ENCODE measurements at regions of chr18 and their contacts with region 1.

Region 1: GRCh38 chr18:70205421-70206397 is at the start of gene RTTN:
- DNase-seq: peak; percentile 97
- H3K4me3 ChIP-seq: peak within 1 kb of the TSS; percentile 67 to 91 (median 80)
- H3K27ac ChIP-seq: peak within 1 kb of the TSS; percentile 91 to 98 (median 94)
- H3K4me1 ChIP-seq: peaks cover 10 to 40% (median 22%) of the 10 kb centered on the region in 6 donors
- H3K27me3 ChIP-seq: no peaks in the 10 kb centered on the region
- CTCF ChIP-seq: peak in 1 of 11 experiments; percentile 8
- POLR2A ChIP-seq: no peak
- total RNA-seq, gene RTTN: 14.6 to 32.3 (median 26.4) TPM

Region 2: DNA sequence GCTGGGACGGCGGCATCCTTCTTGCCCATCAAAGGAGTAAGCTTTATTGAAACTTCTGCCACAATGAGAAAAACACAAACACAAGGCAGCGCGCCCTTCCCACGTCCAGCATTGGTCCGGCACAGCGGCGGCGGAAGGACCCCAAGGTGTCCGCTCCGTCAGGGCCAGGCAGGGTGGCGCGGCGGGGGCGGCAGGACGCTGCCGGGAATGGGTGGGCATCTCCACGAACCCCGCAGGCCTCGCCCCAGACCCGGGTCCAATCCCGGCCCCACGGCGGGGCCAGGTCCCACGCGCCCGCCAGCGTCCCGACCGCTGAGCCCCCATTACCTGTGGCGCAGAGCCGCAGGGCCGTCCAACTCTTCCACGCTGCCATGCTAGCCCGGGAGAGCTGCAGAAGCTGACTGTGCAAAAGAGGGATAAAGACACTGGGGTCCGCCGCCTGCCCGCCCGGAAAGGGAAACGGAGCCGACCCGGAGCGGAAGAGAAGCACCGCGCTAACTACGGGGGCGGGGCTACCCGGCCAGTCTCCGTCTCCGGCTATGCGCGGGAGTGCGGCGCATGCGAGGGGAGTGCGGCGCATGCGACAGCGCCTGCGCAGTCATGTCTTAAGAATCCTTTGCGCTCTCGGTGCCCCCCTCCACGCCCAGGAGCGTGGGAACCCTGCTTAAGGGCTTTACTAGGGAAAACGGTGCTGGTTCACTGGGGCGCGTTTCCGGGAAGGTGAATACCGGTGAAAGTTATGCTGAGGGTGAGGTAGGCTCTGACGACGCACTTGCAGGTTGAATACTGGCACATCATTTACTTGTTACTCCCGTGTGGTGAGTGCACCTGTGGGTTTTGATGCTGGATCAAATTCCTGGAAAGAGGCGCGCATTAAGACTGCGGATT is 1490.9 kb before region 1 on chr18 and contains the start of gene TMX3:
- intact Hi-C with region 1: loop called (anchors 10 kb)
- DNase-seq: peak; percentile 98
- H3K4me3 ChIP-seq: peak within 1 kb of the TSS; percentile 80 to 97 (median 96)
- H3K27ac ChIP-seq: peak within 1 kb of the TSS; percentile 49 to 93 (median 86)
- H3K4me1 ChIP-seq: peaks cover 18 to 58% (median 37%) of the 10 kb centered on the region in 6 donors
- H3K27me3 ChIP-seq: no peaks in the 10 kb centered on the region
- CTCF ChIP-seq: peak in 1 of 11 experiments; percentile 34
- POLR2A ChIP-seq: peak in 2 of 3 donors; percentile 3 to 32
- total RNA-seq, gene TMX3: 47.7 to 75.5 (median 66.2) TPM

Region 3: DNA sequence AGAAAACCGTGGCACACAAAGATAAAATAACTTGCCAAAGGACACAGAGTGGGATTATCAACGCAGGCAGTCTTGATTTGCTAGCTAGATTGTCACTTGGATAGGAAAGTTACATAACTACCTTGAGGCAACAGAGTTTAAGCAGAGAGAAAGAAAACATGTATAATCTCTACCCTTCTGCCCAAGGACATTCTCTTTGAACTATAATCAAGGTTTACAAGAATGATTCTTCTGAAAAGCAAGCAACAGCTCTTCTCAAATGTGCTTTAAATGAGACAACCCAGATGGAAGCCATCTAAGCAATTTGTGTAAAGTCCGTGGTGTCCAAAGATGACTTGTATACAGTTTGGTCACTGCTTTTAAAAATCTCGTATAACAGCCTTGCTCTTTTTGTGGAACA is 435.5 kb before region 1 on chr18:
- intact Hi-C with region 1: no loop called
- DNase-seq: no peak
- H3K4me3 ChIP-seq: no peak overlapping the region
- H3K27ac ChIP-seq: no peak overlapping the region
- H3K4me1 ChIP-seq: no peaks in the 10 kb centered on the region
- H3K27me3 ChIP-seq: no peaks in the 10 kb centered on the region
- CTCF ChIP-seq: no peak
- POLR2A ChIP-seq: no peak

Region 4: DNA sequence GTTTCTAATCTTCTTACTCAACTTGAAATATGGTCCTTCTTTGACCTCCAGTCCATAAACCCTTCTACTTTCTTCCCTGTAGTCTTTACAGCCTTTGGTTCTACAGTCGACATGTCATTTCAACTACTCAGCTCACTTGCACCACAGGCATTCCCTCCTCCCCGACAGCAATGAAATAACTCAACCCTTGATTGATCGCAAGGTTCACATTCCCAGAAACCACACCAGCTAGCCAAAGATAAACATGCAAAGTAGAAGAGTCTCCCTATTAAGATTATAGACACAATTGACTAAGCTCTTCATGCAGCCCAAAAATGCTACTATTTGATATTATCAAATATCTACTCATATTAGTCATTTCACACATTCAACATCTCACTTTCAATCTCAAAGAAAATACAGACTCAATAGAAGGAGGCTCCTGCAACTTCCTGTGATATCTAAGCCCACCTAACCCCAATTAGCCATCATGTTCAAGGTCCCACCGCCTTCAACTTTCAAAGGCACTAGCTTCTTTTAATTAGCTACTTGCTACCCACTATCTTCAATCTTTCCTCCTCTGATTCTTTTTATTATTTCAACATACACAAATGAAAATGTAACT is 51.0 kb before region 1 on chr18:
- intact Hi-C with region 1: no loop called
- DNase-seq: no peak
- H3K4me3 ChIP-seq: no peak overlapping the region
- H3K27ac ChIP-seq: no peak overlapping the region
- H3K4me1 ChIP-seq: no peaks in the 10 kb centered on the region
- H3K27me3 ChIP-seq: no peaks in the 10 kb centered on the region
- CTCF ChIP-seq: no peak
- POLR2A ChIP-seq: no peak

Region 5: DNA sequence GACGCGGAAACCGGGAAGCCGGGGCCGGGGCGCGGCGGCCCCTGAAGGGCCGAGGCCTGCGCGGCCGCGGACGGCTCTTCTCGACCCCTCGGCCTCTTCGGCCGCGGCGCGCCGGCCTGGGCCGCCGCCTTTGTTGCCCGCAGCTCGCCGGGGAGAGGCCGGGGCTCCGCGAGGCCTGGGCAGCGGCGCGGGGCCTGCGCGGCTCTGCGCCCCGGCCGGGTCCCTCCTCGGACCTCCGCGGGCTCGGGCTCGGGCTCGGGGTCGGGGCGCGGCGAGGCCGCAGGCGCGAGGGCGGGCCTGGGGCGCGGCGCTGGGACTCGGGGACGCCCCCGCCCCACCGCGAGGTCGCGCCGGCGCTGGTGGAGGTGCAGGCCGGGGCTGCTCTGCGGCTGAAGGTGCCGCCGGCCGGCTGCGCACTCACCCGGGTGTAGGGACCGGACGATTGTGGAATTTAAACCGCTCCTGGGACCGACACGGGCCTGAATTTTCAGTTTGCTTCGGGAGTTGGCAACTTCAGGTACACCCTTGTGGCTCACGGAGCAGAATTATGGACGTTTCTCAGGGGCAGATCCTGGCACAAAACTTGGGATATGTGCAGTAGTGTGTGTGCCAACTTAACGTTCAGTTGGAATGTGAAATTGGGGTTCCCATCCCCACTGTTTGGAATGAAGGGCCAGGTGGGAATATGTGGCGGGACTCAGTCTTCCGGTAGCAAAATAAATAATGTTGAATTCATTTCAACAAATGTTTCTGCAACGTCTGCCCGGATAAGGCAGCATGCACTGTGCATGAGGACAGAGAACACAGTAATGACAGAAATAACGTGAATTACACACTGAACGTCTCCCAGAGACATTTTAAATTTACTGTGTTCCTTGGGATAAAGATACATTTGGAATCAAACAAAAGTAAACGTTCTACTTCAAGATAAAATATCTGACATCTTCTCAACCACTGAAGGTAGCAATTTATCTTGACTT is 83.9 kb after region 1 on chr18:
- intact Hi-C with region 1: loop called (anchors 10 kb)
- DNase-seq: no peak
- H3K4me3 ChIP-seq: peak overlapping the region; percentile 50 to 90 (median 60)
- H3K27ac ChIP-seq: peak overlapping the region in 7 of 8 donors; percentile 61 to 86 (median 79)
- H3K4me1 ChIP-seq: peaks cover 4 to 45% (median 25%) of the 10 kb centered on the region in 6 donors
- H3K27me3 ChIP-seq: peaks cover 0 to 29% (median 0%) of the 10 kb centered on the region in 7 donors
- CTCF ChIP-seq: no peak
- POLR2A ChIP-seq: no peak